Activated naive CD4-positive, alpha-beta T cell treated with anti-CD3 and anti-CD28 coated beads for 36 hours (primary cell): ENCODE measurements at regions of chr16 and their contacts with region 1.

Region 1: GRCh38 chr16:56203052-56203451 is 11.8 kb downstream of the GNAO1 start:
- DNase-seq: peak; percentile 75
- H3K4me3 Mint-ChIP-seq: no peak overlapping the region
- H3K27ac Mint-ChIP-seq: no peak overlapping the region
- H3K4me1 Mint-ChIP-seq: peaks cover 21% of the 10 kb centered on the region
- H3K27me3 Mint-ChIP-seq: peaks cover 5% of the 10 kb centered on the region

Region 2: DNA sequence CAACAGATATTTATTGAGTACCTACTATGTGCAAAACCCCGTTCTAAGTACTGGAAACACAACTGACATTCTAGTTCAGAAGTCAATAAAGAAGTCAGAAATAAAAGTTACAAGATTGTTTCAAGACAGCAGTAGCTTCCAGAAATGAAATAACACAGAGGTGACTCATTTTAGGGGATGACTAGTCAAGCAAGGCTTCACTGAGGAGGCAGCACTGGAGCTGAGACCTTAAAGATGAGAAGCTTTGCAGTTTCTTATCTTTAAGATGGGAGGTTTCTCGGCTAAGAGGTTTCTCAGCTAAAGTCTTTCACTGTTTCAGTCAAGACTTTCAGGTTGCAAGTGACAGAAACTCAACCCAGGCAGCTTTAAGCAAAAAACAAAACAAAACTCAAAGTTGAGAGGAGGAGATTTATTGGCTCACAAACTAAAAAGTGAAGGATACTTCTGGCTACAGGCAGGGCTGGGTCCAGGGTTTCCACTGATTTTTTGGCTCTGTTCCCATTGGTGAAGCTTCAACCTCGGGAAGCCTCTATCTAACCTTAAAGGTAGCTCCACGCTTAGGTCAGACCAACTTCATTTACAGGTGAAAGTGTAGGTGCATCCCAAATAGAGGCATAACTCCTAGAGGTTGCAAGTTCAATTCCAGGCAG is 731.5 kb before region 1 on chr16:
- CTCF ChIA-PET with region 1: no interaction called
- intact Hi-C with region 1: loop called (anchors 2 kb)
- DNase-seq: peak; percentile 49
- H3K4me3 Mint-ChIP-seq: no peak overlapping the region
- H3K27ac Mint-ChIP-seq: peak overlapping the region; percentile 83
- H3K4me1 Mint-ChIP-seq: peaks cover 12% of the 10 kb centered on the region
- H3K27me3 Mint-ChIP-seq: peaks cover 5% of the 10 kb centered on the region

Region 3: DNA sequence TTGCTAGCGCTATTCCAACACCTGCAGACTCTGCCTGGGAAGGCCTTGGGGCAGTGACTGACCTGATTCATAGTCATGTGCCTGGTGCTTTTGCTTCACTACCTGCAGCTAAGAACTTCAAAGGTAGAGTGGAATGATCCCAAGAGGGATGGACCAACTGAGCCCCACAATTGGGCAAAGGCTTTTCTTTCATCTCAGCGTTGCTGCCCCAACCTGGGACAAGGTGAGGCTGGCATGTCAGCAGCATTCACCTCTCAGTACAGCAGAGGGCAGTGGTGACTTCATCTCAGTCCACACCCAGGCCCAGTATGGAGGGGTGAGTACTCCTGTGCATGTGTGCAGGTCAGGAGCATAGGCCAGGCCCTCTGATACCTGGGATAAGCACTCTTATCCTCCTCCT is 161.4 kb before region 1 on chr16:
- CTCF ChIA-PET with region 1: interaction called, 5 read pairs
- intact Hi-C with region 1: loop called (anchors 1 kb)
- DNase-seq: peak; percentile 41
- H3K4me3 Mint-ChIP-seq: no peak overlapping the region
- H3K27ac Mint-ChIP-seq: no peak overlapping the region
- H3K4me1 Mint-ChIP-seq: no peaks in the 10 kb centered on the region
- H3K27me3 Mint-ChIP-seq: peaks cover 5% of the 10 kb centered on the region

Region 4: GRCh38 chr16:56191156-56191815 is 11.8 kb before region 1 on chr16 and contains the start of gene GNAO1:
- CTCF ChIA-PET with region 1: interaction called, 6 read pairs
- intact Hi-C with region 1: loop called (anchors 1 kb)
- DNase-seq: peak; percentile 41
- H3K4me3 Mint-ChIP-seq: peak within 1 kb of the TSS; percentile 72
- H3K27ac Mint-ChIP-seq: no peak within 1 kb of the TSS
- H3K4me1 Mint-ChIP-seq: peaks cover 23% of the 10 kb centered on the region
- H3K27me3 Mint-ChIP-seq: peaks cover 70% of the 10 kb centered on the region
- total RNA-seq, gene GNAO1: 0.25 to 0.50 TPM

Region 5: DNA sequence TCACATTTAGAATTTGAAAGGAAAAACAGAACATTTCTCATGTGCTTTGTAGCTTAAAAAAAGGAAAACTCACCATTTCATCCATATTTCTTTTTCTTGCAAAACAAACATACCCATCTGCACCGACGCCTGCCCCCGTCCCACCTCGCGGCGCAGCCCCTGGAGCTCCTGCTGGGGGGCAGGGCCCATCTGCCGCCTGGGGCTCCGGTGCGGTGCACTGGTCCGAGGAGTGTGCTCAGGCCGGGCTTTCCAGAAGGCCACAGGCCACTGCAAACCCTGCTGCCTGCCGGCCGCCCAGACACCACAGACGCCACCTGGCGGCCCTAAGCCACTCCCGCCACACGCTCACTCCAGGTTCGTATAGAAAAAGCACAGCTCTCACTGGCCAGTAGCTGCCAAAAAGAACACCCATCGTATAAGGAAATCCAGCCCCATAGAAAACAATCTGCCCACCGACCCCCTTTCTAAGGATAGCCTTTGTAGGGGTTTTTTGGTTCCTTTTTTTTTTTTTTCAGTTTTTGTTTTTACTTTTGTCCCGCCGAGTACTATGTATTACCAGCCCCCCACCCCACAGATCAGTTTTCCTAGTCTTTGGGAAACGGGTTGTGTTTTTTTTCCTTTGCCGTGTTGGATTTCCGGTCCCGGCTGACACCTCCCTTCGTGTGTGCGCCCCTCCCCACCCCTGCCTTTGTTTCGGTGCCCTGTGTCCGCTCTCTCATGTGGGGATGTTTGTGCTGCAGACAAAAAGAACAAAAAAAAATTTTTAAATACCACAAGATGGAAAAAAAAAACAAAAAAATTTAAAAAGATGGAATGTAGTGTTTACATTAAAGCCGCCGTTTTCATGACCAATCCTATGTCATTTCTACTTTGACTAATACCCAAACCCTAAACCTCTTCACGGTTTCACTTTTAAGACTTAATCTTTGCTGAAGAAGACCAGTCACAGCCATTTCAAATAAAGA is 153.5 kb after region 1 on chr16:
- CTCF ChIA-PET with region 1: no interaction called
- intact Hi-C with region 1: loop called (anchors 1 kb)
- DNase-seq: peak; percentile 68
- H3K4me3 Mint-ChIP-seq: peak overlapping the region; percentile 74
- H3K27ac Mint-ChIP-seq: peak overlapping the region; percentile 86
- H3K4me1 Mint-ChIP-seq: peaks cover 31% of the 10 kb centered on the region
- H3K27me3 Mint-ChIP-seq: no peaks in the 10 kb centered on the region